ENCODE measurements at regions of chr17 and their contacts with region 1.

Region 1: DNA sequence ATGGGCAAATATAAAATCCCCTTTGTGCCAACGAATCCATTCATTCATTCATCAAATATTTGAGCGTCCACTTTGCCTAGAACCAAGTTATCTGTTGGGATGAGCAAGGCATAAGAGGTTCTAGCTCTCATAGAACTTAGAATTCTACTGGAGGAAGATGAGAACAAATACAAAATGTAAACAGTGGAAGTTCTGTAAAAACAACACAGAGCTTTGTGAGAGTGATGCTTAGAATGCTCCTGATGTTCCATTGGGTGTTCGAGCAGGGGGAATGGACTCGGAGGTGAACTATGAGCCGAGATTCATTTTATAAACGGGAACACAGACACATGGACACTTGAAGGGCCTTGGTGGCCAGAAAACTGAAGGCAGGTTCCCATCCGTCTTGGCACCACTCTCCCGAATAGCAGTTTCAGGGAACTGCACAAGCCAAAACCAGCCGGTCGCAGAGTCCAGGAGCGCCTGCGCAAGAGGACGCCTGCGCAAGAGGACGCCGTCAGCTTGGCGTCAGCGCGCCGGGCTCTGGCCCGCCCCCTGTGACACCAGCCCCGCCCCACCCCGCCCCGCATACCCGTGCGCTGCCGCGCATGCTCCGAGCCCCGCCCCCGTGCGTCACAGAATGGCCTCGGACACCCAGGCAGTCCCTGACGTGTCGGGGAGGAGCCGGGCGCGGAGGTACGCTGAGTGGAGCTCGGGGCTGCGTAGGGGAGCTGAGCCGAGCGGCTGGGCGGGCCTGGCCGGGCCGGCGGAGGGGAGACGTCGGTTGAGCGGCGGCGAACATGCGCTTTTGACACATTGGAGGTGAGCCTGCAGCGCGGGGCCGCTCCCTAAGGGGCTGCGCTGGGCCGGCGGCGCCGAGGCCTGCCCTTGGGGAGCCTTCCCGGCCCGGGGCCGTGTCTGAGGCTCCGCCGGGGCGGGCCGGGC is at the start of gene NDEL1:
- DNase-seq: peak; percentile 97
- ATAC-seq: peak; percentile 94
- H3K4me3 Mint-ChIP-seq: peak within 1 kb of the TSS; percentile 91
- H3K27ac Mint-ChIP-seq: peak within 1 kb of the TSS; percentile 93
- H3K4me1 Mint-ChIP-seq: peaks cover 32% of the 10 kb centered on the region
- H3K27me3 Mint-ChIP-seq: no peaks in the 10 kb centered on the region
- CTCF ChIP-seq: no peak
- total RNA-seq, gene NDEL1: 64.6 and 82.6 TPM in 2 replicates

Region 2: DNA sequence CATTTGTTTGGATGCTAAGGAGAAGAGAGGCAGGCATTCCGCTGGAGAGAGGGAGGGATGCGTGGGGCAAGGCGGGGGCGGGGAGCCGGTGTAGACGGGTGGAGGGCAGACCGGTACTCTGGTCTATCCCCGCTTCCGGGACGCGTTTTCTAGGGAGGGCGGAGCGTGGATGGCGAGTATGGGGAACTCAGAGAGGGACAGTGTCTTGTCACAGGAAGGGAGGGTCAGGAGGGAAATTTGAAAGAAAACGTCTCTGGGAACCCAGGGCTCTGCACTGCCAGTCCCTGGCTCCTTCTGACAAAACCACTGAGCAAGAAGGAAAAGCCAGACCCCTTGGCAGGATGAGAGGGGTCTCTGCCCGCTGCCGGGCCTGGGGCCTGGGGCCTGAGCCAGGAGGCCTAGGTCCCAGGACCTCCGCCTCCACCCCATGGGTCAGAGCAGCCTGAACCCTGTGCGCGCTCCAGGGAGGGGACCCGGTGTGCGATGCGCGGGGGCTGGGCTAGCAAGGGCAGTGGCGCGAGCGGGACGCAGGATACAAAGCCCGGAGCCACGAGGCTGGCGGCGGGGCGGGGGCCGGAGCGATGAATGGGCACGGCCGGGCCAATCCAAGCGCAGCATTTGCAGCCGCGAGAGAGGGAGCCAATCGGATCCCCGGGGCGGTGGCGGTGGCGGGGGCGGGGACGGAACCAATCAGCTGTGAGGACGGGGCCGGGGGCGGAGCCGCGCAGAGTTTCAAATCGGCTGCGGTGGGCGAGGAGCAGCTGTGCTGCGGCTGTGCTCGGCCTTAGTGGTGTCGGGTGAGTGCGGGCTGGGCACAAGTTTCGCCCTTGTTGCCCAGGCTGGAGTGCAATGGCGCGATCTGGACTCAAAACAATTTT is 1991.6 kb before region 1 on chr17 and contains the start of gene PIMREG:
- CTCF ChIA-PET with region 1: no interaction called
- POLR2A ChIA-PET with region 1: no interaction called
- intact Hi-C with region 1: loop called (anchors 5 kb)
- DNase-seq: peak; percentile 83
- ATAC-seq: peak; percentile 94
- H3K4me3 Mint-ChIP-seq: peak within 1 kb of the TSS; percentile 86
- H3K27ac Mint-ChIP-seq: peak within 1 kb of the TSS; percentile 74
- H3K4me1 Mint-ChIP-seq: peaks cover 13% of the 10 kb centered on the region
- H3K27me3 Mint-ChIP-seq: peaks cover 14% of the 10 kb centered on the region
- CTCF ChIP-seq: no peak
- total RNA-seq, gene PIMREG: 0.27 and 0.69 TPM in 2 replicates

Region 3: GRCh38 chr17:8630802-8631553 is 195.5 kb after region 1 on chr17:
- CTCF ChIA-PET with region 1: no interaction called
- POLR2A ChIA-PET with region 1: interaction called, 6 read pairs
- intact Hi-C with region 1: loop called (anchors 2 kb)
- DNase-seq: peak; percentile 78
- ATAC-seq: peak; percentile 97
- H3K4me3 Mint-ChIP-seq: peak overlapping the region; percentile 97
- H3K27ac Mint-ChIP-seq: no peak overlapping the region
- H3K4me1 Mint-ChIP-seq: peaks cover 19% of the 10 kb centered on the region
- H3K27me3 Mint-ChIP-seq: peaks cover 37% of the 10 kb centered on the region
- CTCF ChIP-seq: no peak

Region 4: DNA sequence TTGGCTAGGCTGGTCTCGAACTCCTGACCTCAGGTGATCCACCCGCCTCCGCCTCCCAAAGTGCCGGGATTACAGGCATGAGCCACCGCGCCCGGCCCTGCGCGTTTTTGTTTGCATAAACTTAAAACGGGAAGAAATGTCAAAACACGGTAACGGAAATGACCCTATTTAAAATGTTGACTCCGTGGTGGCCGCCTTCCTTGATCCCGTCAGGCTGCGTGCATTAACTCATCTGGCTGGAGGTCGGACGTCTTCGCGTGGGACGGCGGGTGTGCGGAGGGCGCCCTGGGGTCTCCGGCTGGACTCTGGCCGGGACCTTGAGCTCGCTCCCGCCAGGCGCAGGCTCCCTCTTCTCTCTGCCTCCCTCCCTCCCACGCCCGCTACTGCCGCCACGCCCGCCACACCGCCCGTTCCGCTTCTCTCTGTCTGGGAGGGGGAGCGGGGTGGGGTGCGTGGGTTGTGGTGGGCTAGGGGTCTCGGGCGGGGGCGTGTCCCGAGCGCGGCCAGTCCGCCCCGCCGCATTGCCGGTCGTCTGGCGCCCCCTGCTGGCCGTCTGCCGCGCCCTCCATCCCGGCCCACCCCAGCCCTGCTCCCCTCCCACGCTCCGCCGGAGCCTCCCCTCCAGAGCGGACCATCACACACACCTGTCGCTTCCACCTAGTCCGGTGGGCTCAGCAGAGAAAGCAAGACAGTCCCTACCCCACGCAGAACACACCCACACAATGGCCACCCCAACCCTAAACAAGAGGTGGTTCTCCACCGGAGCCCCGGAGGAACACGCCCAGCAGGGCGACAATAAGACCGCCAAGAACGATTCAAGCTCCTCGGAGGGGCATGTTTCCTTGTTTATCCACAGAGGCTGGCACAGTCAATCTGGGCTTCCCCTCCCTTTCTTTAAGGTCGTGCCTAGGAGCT is 310.3 kb after region 1 on chr17:
- CTCF ChIA-PET with region 1: interaction called, 4 read pairs
- POLR2A ChIA-PET with region 1: interaction called, 6 read pairs
- intact Hi-C with region 1: loop called (anchors 1 kb)
- DNase-seq: peak; percentile 84
- ATAC-seq: peak; percentile 81
- H3K4me3 Mint-ChIP-seq: peak overlapping the region; percentile 85
- H3K27ac Mint-ChIP-seq: peak overlapping the region; percentile 77
- H3K4me1 Mint-ChIP-seq: peaks cover 10% of the 10 kb centered on the region
- H3K27me3 Mint-ChIP-seq: no peaks in the 10 kb centered on the region
- CTCF ChIP-seq: peak; percentile 96

Region 5: GRCh38 chr17:8806926-8807550 is 371.5 kb after region 1 on chr17:
- CTCF ChIA-PET with region 1: no interaction called
- POLR2A ChIA-PET with region 1: no interaction called
- intact Hi-C with region 1: loop called (anchors 1 kb)
- DNase-seq: peak; percentile 34
- ATAC-seq: peak; percentile 90
- H3K4me3 Mint-ChIP-seq: peak overlapping the region; percentile 56
- H3K27ac Mint-ChIP-seq: peak overlapping the region; percentile 92
- H3K4me1 Mint-ChIP-seq: peaks cover 42% of the 10 kb centered on the region
- H3K27me3 Mint-ChIP-seq: no peaks in the 10 kb centered on the region
- CTCF ChIP-seq: no peak

Region 6: DNA sequence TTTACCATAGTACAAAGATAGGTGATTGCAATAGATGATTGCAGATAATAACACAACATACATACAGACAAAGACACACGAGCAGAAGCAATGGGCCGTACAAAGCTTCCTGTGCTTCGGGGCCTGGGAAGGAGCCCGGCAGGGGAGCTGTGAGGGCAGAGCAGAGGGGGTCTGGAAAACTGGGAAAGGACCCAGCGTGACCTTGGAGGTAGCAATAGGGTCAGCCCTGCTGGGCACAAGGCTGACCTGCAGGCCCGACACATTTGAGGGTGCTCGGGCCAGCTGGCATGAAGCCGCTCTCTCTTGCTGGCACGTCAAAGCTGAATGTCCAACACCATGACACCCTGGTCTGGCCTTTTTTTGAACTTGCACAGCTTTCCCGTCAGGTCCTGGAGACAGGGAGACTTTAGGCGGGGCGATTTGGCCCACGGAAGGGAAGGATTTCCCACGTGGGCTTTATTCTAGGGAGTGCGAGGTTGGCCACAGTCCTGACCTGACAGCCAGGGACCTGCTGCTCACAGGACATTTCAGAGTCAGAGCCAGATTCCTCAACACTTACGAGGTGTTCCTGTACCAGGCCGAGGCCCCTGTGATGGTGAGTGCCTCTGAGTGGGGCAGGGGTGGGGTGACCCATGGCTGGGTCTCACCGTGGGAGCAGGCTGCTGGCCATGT is 669.0 kb after region 1 on chr17:
- CTCF ChIA-PET with region 1: no interaction called
- POLR2A ChIA-PET with region 1: interaction called, 10 read pairs
- intact Hi-C with region 1: no loop called
- DNase-seq: no peak
- ATAC-seq: no peak
- H3K4me3 Mint-ChIP-seq: no peak overlapping the region
- H3K27ac Mint-ChIP-seq: no peak overlapping the region
- H3K4me1 Mint-ChIP-seq: peaks cover 8% of the 10 kb centered on the region
- H3K27me3 Mint-ChIP-seq: no peaks in the 10 kb centered on the region
- CTCF ChIP-seq: no peak